ENCODE measurements at regions of chr5 and their contacts with region 1.

Region 1: DNA sequence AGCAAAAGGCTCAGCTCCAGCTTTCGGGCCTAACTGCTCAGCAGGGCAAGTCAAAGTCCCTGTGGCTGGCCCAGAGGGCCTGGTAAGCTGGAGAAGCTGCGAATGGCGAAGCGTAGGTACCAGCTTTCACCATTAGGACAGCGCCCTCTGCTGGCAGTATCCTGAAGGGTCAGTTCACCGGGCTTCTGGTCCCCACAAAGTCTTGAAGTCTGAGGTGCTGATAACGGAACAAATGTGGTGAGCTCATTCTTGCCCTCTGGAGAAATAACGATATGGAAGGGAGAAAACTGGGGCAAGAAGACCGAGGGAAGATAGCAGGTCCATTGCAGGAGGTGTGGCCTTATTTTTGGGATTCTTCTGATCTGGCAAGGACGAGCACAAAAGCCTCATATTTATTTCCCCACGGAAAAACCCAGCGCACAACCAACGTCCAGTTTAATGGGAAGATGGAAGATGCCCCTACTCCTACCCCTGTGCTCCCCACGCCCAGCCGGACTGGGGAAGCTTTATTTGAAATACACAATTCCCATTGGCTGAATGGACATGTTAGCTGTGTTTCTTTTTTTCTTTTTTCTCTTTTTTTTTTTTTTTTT is 7.2 kb downstream of the SOWAHA start:
- DNase-seq: peak; percentile 94
- H3K4me3 Mint-ChIP-seq: no peak overlapping the region
- H3K27ac Mint-ChIP-seq: no peak overlapping the region
- H3K4me1 Mint-ChIP-seq: peaks cover 10% of the 10 kb centered on the region
- H3K27me3 Mint-ChIP-seq: peaks cover 26% of the 10 kb centered on the region

Region 2: GRCh38 chr5:132272311-132273210 is 547.7 kb before region 1 on chr5:
- CTCF ChIA-PET with region 1: no interaction called
- POLR2A ChIA-PET with region 1: no interaction called
- intact Hi-C with region 1: no loop called
- DNase-seq: peak; percentile 81
- H3K4me3 Mint-ChIP-seq: no peak overlapping the region
- H3K27ac Mint-ChIP-seq: no peak overlapping the region
- H3K4me1 Mint-ChIP-seq: peaks cover 8% of the 10 kb centered on the region
- H3K27me3 Mint-ChIP-seq: peaks cover 12% of the 10 kb centered on the region

Region 3: DNA sequence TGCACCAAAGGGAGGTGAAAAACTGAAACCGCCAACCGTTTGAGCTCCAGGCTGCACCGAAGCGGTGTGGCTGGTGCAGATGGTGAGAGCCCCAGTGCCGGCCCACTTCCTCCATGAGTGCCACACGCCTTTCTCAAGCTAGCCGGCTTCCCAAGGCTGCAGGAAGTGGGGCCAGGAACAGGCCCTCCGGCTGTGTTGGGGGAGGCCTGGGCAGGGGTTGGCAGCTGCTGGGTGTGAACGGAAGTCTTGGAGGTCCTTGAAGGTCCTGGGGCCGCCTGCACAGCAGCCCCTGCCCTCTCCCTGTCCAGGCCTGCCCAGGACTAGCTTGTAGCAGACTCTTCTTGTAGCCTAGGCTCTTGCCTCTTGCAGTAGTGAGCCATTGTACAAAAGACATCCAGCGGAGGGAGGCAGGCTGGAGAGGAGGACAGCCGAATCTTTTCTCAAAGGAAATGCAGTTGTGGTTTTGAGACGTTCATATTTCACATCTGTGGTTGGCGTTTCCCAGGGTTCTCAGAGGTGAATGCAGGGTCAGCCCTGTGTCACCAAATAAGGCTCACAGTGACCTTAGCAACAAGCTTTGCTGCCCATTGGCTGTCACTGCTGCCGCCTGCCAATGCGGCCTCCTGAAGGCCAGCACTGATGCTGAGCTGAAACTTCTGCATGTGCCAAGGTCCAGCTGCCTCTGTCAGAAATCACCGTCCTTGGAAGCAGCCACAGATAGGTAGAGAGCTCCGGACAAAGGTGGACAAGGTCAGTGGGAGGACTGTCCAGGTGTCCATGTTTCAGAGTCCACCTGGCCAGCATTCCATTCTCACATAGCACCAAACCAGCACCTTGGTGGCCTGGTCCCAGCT is 353.6 kb before region 1 on chr5:
- CTCF ChIA-PET with region 1: no interaction called
- POLR2A ChIA-PET with region 1: no interaction called
- intact Hi-C with region 1: no loop called
- DNase-seq: peak; percentile 85
- H3K4me3 Mint-ChIP-seq: peak overlapping the region; percentile 68
- H3K27ac Mint-ChIP-seq: peak overlapping the region; percentile 75
- H3K4me1 Mint-ChIP-seq: peaks cover 86% of the 10 kb centered on the region
- H3K27me3 Mint-ChIP-seq: no peaks in the 10 kb centered on the region

Region 4: GRCh38 chr5:132506094-132506692 is 314.1 kb before region 1 on chr5:
- CTCF ChIA-PET with region 1: interaction called, 30 read pairs
- POLR2A ChIA-PET with region 1: no interaction called
- intact Hi-C with region 1: loop called (anchors 1 kb)
- DNase-seq: peak; percentile 34
- H3K4me3 Mint-ChIP-seq: no peak overlapping the region
- H3K27ac Mint-ChIP-seq: no peak overlapping the region
- H3K4me1 Mint-ChIP-seq: peaks cover 2% of the 10 kb centered on the region
- H3K27me3 Mint-ChIP-seq: peaks cover 22% of the 10 kb centered on the region

Region 5: DNA sequence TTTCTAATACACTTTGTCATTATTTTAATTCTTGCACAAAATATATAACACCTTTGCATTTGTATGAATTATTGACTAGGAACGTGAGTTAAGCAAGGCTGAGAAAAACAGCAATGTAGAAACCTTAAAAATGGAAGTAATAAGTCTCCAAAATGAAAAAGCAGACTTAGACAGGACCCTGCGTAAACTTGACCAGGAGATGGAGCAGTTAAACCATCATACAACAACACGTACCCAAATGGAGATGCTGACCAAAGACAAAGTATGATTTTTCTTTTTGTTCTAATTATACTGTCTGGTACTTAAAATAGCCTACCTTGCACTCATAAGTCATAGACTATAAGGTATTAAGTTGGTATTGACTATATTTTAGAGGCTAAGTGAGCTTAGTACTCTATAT is 229.1 kb before region 1 on chr5:
- CTCF ChIA-PET with region 1: interaction called, 8 read pairs
- POLR2A ChIA-PET with region 1: no interaction called
- intact Hi-C with region 1: loop called (anchors 1 kb)
- DNase-seq: no peak
- H3K4me3 Mint-ChIP-seq: no peak overlapping the region
- H3K27ac Mint-ChIP-seq: no peak overlapping the region
- H3K4me1 Mint-ChIP-seq: peaks cover under 1% of the 10 kb centered on the region
- H3K27me3 Mint-ChIP-seq: no peaks in the 10 kb centered on the region

Region 6: GRCh38 chr5:132746954-132747615 is 73.2 kb before region 1 on chr5 and contains the start of gene CCNI2:
- CTCF ChIA-PET with region 1: interaction called, 22 read pairs
- POLR2A ChIA-PET with region 1: interaction called, 6 read pairs
- intact Hi-C with region 1: loop called (anchors 2 kb)
- DNase-seq: peak; percentile 75
- H3K4me3 Mint-ChIP-seq: peak within 1 kb of the TSS; percentile 72
- H3K27ac Mint-ChIP-seq: peak within 1 kb of the TSS; percentile 67
- H3K4me1 Mint-ChIP-seq: peaks cover 27% of the 10 kb centered on the region
- H3K27me3 Mint-ChIP-seq: no peaks in the 10 kb centered on the region
- total RNA-seq, gene CCNI2: 2.7 to 4.2 TPM

Region 7: GRCh38 chr5:132797651-132798050 is 22.6 kb before region 1 on chr5:
- CTCF ChIA-PET with region 1: interaction called, 12 read pairs
- POLR2A ChIA-PET with region 1: no interaction called
- intact Hi-C with region 1: no loop called
- DNase-seq: no peak
- H3K4me3 Mint-ChIP-seq: no peak overlapping the region
- H3K27ac Mint-ChIP-seq: no peak overlapping the region
- H3K4me1 Mint-ChIP-seq: no peaks in the 10 kb centered on the region
- H3K27me3 Mint-ChIP-seq: peaks cover 19% of the 10 kb centered on the region

Region 8: GRCh38 chr5:132866342-132867045 is 46.2 kb after region 1 on chr5 and contains the starts of genes GDF9 and UQCRQ:
- CTCF ChIA-PET with region 1: interaction called, 10 read pairs
- POLR2A ChIA-PET with region 1: no interaction called
- intact Hi-C with region 1: no loop called
- DNase-seq: peak; percentile 95
- H3K4me3 Mint-ChIP-seq: peak within 1 kb of the TSS; percentile 100
- H3K27ac Mint-ChIP-seq: peak within 1 kb of the TSS; percentile 99
- H3K4me1 Mint-ChIP-seq: peaks cover 28% of the 10 kb centered on the region
- H3K27me3 Mint-ChIP-seq: no peaks in the 10 kb centered on the region
- total RNA-seq, gene GDF9: 0.43 to 0.73 TPM
- total RNA-seq, gene UQCRQ: 540 to 565 TPM

Region 9: GRCh38 chr5:132927355-132928061 is 107.2 kb after region 1 on chr5:
- CTCF ChIA-PET with region 1: no interaction called
- POLR2A ChIA-PET with region 1: no interaction called
- intact Hi-C with region 1: no loop called
- DNase-seq: no peak
- H3K4me3 Mint-ChIP-seq: no peak overlapping the region
- H3K27ac Mint-ChIP-seq: no peak overlapping the region
- H3K4me1 Mint-ChIP-seq: peaks cover 1% of the 10 kb centered on the region
- H3K27me3 Mint-ChIP-seq: no peaks in the 10 kb centered on the region